BJ (cell line): ENCODE measurements at regions of chr19 and their contacts with region 1.

Region 1: GRCh38 chr19:57814505-57815251 is at the start of gene ZNF552:
- DNase-seq: peak; percentile 66
- H3K4me3 ChIP-seq: peak within 1 kb of the TSS; percentile 77
- H3K27me3 ChIP-seq: no peaks in the 10 kb centered on the region
- CTCF ChIP-seq: no peak
- polyA plus RNA-seq, gene ZNF552: 2.1 and 2.5 TPM in 2 replicates

Region 2: DNA sequence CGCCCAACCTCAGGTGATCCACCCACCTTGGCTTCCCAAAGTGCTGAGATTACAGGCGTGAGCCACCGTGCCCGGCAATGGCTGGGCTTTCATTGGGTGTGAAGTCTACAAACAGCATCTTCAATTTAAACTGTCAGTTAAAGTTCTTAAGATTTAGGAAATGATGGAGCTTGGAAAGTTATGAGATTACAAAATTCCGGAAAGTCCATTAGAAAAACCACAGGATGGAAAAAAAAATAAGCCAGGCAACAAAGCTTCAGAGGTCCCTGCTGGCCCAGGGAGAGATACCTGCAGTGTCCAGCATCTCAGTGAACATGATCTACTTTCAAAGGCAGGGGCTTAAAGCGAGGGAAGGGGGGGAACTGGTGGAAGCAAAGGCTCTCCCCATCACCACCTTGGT is 10.8 kb after region 1 on chr19:
- CTCF ChIA-PET with region 1: no interaction called
- POLR2A ChIA-PET with region 1: interaction called, 24 read pairs
- DNase-seq: no peak
- H3K4me3 ChIP-seq: no peak overlapping the region
- H3K27me3 ChIP-seq: no peaks in the 10 kb centered on the region
- CTCF ChIP-seq: no peak